ENCODE measurements at regions of chr1 and their contacts with region 1.

Region 1: DNA sequence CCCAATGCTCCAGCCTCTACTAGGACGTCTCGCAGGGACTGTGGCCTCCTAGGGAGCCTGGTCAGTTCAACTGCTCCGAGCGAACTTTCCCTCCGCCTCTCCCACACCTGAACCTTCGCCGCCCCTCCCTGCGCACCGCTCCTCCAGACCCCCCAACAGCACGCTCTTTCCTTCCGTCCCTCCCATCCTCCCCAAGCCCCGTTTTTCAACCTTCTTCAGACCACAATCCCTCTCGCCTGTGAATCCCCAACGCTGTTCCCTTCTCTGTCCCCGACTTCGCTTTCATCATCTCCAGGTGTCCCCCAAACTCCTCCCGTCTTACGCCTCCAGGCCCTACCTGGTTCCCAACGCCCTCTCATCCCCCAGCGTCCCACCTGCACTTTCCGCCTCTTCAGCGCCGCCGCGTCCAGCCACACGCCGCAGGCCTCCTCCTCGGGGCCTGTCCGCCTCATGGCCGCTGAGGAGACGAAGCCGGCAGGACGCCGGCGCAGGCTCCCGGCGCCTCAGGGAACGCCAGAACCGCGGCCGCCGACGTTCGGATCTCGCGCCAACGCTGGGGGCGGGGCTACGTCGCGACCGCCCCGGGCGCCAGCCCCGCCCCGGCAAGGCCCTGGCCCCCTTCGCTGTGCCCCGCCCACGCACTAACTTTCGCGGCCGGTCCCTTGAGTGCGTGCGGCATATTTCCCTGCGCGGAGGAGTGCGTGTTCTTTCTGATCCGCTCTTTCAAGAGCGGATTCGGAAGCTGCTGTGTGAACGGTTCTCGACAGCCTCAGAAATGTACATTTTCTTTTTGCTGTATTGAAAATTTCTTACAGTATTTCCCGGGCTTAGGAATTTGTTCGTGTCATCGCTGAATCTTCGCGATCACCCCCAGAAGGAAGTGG is at the start of gene AUNIP:
- DNase-seq: peak; percentile 78 to 91
- H3K4me3 ChIP-seq: peak within 1 kb of the TSS; percentile 74
- H3K4me3 Mint-ChIP-seq: peak within 1 kb of the TSS; percentile 98
- H3K27ac Mint-ChIP-seq: peak within 1 kb of the TSS; percentile 96
- H3K4me1 ChIP-seq: peaks cover 6% of the 10 kb centered on the region; the same call in 1 of the 2 replicates
- H3K4me1 Mint-ChIP-seq: peaks cover 6% of the 10 kb centered on the region
- H3K27me3 ChIP-seq: no peaks in the 10 kb centered on the region
- H3K27me3 Mint-ChIP-seq: no peaks in the 10 kb centered on the region
- CTCF ChIP-seq: no peak
- total RNA-seq, gene AUNIP: 12.3 and 16.8 TPM in 2 replicates

Region 2: DNA sequence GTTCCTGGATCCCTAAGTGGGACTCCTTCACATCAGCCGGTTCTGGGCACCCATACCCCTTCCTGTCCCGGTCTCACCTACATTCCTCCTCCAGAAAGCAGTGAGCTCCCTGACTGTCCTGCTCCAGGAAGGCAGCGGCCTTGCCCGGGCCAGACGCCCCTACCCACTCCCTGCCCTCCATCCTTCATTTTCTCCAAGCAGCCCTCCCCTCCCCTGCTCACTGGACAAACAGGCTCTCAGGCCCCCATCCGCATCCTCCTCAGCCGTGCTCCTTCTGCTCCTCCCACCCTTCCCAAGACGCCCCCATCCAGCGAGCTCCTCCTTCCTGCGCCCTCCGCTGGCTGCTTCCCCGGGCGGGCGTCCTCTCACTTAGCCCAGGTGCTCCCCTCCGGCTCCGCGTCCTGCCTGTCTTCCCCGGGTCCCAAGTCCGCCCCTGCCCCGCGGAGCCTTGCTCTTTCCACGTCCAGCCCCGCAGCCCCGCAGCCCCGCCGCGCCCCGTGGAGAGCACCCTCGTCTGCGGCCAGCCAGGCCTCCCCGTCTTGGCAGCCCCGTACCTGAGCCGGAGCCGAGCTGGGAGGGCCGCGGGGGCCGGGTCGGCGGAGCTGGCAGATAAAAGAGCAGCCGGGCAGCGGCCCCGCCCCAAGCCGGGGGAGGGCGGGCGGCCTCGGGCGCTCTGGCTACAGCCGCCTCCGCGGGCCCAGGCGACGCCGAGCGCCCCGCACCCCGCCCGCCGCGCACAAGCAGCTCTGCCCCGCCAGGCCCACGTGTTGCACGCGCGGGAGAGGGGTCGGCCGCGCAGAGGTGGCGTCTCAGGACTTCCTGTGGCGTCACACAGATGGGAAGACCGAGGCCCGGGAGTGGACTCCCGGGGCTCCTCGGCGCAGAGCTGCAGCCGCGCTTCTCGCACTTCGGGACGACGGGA is 16.0 kb after region 1 on chr1 and contains the start of gene PAQR7:
- CTCF ChIA-PET with region 1: interaction called, 3 read pairs
- POLR2A ChIA-PET with region 1: no interaction called
- intact Hi-C with region 1: loop called (anchors 2 kb)
- DNase-seq: peak; percentile 85 to 88
- H3K4me3 ChIP-seq: peak within 1 kb of the TSS; percentile 40
- H3K4me3 Mint-ChIP-seq: peak within 1 kb of the TSS; percentile 99
- H3K27ac Mint-ChIP-seq: peak within 1 kb of the TSS; percentile 93
- H3K4me1 ChIP-seq: peaks cover 32% of the 10 kb centered on the region
- H3K4me1 Mint-ChIP-seq: peaks cover 16% of the 10 kb centered on the region
- H3K27me3 ChIP-seq: no peaks in the 10 kb centered on the region
- H3K27me3 Mint-ChIP-seq: no peaks in the 10 kb centered on the region
- CTCF ChIP-seq: peak in 1 of 2 experiments; percentile 24
- total RNA-seq, gene PAQR7: 22.3 and 26.0 TPM in 2 replicates

Measured in Caco-2 (cell line).